Naive thymus-derived CD4-positive, alpha-beta T cell (primary cell): ENCODE measurements at regions of chr5 and their contacts with region 1.

Region 1: DNA sequence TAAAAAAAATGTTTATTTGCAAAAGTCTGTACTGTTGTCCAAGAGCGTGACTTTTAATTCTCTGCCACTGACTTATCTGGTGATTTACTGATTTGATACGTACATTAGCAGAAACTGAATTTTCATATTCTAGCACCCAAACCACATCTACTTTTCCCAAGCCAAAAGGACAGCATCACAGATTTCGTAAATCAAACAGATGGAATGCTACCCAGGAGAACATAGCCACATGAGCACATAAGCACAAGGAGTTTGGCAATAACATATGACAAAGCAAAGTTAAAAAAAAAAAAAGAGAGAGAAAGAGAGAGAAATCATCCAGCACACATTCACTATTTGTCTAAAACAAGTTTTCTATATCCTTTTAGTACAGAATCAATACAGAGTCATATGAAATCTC is 83.7 kb downstream of the HINT1 start:
- DNase-seq: no peak
- ATAC-seq: no peak
- H3K4me3 ChIP-seq: no peak overlapping the region
- H3K4me3 Mint-ChIP-seq: peak overlapping the region in 1 of 10 donors; percentile 10
- H3K27ac ChIP-seq: no peak overlapping the region
- H3K27ac Mint-ChIP-seq: peak overlapping the region in 1 of 9 donors; percentile 38
- H3K4me1 ChIP-seq: peaks cover 8 to 10% of the 10 kb centered on the region in 2 donors
- H3K4me1 Mint-ChIP-seq: peaks cover 17 to 39% (median 30%) of the 10 kb centered on the region in 7 donors
- H3K27me3 ChIP-seq: no peaks in the 10 kb centered on the region
- H3K27me3 Mint-ChIP-seq: peaks cover 0 to 4% (median 0%) of the 10 kb centered on the region in 5 donors

Region 2: DNA sequence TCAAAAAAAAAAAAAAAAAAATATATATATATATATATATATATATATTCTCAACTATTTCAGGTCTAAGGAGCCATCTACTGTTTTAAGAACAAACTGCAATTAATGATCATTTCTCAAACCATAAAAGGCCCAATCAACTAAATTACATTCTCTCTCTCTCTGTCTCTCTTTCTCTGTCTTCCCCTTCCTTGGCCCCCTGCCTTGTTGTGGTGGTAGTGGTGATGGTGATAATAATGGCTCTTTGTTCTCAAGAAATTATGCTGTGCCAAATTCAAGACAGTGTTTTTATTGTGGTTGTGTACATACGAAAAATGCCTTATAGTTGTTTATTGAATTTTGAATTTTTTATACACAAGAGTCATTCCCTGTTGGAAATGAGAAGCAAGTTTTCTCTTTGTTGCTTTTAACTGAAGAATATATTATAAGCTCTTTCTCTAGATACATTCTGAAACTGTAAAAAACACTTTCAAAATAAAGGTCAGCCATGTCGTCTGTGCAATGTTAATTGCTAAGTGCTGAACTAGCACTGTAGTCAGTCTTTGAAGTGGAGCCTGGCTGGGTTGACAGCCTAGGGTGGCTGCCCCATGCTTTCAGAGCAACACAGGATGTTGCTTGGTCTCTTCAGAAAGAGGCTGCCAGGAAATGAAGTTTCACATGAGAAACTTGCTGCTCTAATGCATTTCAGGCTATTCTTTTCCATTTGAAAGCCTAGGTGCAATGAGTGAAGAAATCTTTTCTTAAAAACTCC is 12.3 kb before region 1 on chr5:
- CTCF ChIA-PET with region 1: interaction called, 3 read pairs
- POLR2A ChIA-PET with region 1: interaction called, 5 read pairs
- intact Hi-C with region 1: loop called (anchors 1 kb)
- DNase-seq: peak; percentile 8 to 81 (median 67)
- ATAC-seq: peak; percentile 99
- H3K4me3 ChIP-seq: peak overlapping the region; percentile 20
- H3K4me3 Mint-ChIP-seq: peak overlapping the region; percentile 1 to 83 (median 73)
- H3K27ac ChIP-seq: peak overlapping the region; percentile 46
- H3K27ac Mint-ChIP-seq: peak overlapping the region; percentile 83 to 99 (median 92)
- H3K4me1 ChIP-seq: peaks cover 18 to 29% of the 10 kb centered on the region in 2 donors
- H3K4me1 Mint-ChIP-seq: peaks cover 28 to 68% (median 58%) of the 10 kb centered on the region in 7 donors
- H3K27me3 ChIP-seq: no peaks in the 10 kb centered on the region
- H3K27me3 Mint-ChIP-seq: no peaks in the 10 kb centered on the region

Region 3: GRCh38 chr5:131353991-131354390 is 272.6 kb after region 1 on chr5:
- CTCF ChIA-PET with region 1: no interaction called
- POLR2A ChIA-PET with region 1: no interaction called
- intact Hi-C with region 1: no loop called
- DNase-seq: no peak
- ATAC-seq: no peak
- H3K4me3 ChIP-seq: no peak overlapping the region
- H3K4me3 Mint-ChIP-seq: peak overlapping the region in 1 of 10 donors; percentile 6
- H3K27ac ChIP-seq: no peak overlapping the region
- H3K27ac Mint-ChIP-seq: peak overlapping the region in 7 of 9 donors; percentile 53 to 88 (median 63)
- H3K4me1 ChIP-seq: peaks cover 34 to 37% of the 10 kb centered on the region in 2 donors
- H3K4me1 Mint-ChIP-seq: peaks cover 30 to 76% (median 66%) of the 10 kb centered on the region in 7 donors
- H3K27me3 ChIP-seq: no peaks in the 10 kb centered on the region
- H3K27me3 Mint-ChIP-seq: no peaks in the 10 kb centered on the region

Region 4: DNA sequence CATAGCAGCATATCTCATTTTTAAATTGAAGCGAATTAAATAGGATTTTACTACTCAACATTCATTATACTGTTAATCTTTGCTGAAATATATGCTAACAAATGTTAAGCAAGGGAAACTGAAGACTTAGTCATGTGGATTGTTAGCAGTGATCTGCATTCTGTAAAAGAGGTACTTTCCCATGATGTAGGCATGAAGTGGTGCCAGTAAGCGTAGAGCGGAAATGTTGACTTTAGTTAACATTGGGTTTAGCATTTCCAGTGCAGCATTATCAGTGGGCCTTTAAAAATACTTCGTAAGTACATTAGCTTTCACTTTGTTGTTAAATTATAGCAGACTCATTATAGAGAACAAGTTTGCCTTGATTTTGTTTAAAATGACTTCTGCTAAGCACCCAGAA is 312.8 kb after region 1 on chr5:
- CTCF ChIA-PET with region 1: no interaction called
- POLR2A ChIA-PET with region 1: no interaction called
- intact Hi-C with region 1: loop called in 1 of 2 experiments (anchors 10 kb)
- DNase-seq: peak in 8 of 9 donors; percentile 36 to 84 (median 77)
- ATAC-seq: peak; percentile 97
- H3K4me3 ChIP-seq: no peak overlapping the region
- H3K4me3 Mint-ChIP-seq: peak overlapping the region in 9 of 10 donors; percentile 30 to 85 (median 69)
- H3K27ac ChIP-seq: peak overlapping the region; percentile 84
- H3K27ac Mint-ChIP-seq: peak overlapping the region; percentile 88 to 97 (median 91)
- H3K4me1 ChIP-seq: peaks cover 59 to 61% of the 10 kb centered on the region in 2 donors
- H3K4me1 Mint-ChIP-seq: peaks cover 28 to 95% (median 84%) of the 10 kb centered on the region in 7 donors
- H3K27me3 ChIP-seq: no peaks in the 10 kb centered on the region
- H3K27me3 Mint-ChIP-seq: no peaks in the 10 kb centered on the region